Activated B cell treated with CpG ODN at 0.5 μM for 24 hours (primary cell): ENCODE measurements at regions of chr6 and their contacts with region 1.

Region 1: GRCh38 chr6:28104392-28105244 is 19.8 kb upstream of the ZSCAN16 start:
- DNase-seq: peak; percentile 80
- ATAC-seq: peak; percentile 98
- H3K4me3 Mint-ChIP-seq: peak overlapping the region; percentile 94
- H3K27ac Mint-ChIP-seq: peak overlapping the region; percentile 95
- H3K4me1 Mint-ChIP-seq: peaks cover 10% of the 10 kb centered on the region
- H3K27me3 Mint-ChIP-seq: peaks cover 6% of the 10 kb centered on the region
- CTCF ChIP-seq: no peak

Region 2: DNA sequence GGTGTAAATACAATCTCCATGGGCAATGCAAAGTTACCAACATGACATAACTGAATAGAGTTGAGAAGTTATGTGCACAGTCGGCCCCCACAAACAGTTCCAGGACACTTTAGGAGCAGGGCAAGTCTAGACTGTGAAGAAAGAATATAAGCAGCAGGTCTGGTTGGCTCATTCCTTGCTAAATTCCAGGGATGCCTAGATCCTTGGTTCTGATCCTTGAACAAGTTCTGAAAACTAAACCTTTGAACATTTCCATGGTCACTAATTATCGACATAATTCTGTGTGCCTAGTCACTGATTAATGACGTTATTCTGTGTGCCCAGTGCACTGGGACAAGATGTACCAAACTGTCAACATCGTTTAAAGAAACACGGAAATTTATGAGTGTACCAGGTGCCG is 643.9 kb before region 1 on chr6:
- CTCF ChIA-PET with region 1: no interaction called
- POLR2A ChIA-PET with region 1: no interaction called
- intact Hi-C with region 1: no loop called
- DNase-seq: no peak
- ATAC-seq: no peak
- H3K4me3 Mint-ChIP-seq: no peak overlapping the region
- H3K27ac Mint-ChIP-seq: no peak overlapping the region
- H3K4me1 Mint-ChIP-seq: no peaks in the 10 kb centered on the region
- H3K27me3 Mint-ChIP-seq: no peaks in the 10 kb centered on the region
- CTCF ChIP-seq: no peak

Region 3: DNA sequence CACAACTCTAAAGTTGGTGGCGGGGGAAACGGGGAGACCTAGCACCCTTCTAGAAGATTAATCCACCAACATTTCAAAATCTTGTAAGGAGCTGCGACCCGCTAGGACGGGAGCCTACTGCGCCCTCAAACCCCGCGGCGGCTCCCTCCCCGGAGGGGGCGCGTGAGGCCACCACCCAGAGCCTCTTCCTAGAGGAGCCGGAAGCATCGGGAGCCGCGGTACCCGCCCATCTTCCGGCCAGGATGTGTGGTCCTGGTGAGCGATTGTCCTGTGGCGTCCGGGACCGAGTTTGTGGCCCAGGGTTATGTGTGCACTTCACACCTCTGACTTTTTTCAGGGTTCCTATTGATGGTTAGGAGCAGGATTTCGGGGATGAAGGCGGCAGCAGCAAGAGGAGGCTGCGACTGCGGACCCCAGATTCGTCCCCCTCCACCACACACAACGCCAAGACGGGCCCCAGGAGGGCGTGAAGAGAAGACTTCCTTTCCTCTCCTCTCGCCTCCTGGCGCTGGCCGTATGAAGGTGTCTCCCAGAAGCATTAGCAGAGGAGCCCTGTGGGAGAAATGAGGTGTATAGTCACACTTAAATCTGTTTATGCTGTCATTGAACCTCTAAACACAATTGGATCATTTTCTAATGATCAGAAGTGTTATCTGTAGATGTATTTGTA is 13.6 kb before region 1 on chr6:
- CTCF ChIA-PET with region 1: no interaction called
- POLR2A ChIA-PET with region 1: interaction called, 12 read pairs
- intact Hi-C with region 1: no loop called
- DNase-seq: no peak
- ATAC-seq: no peak
- H3K4me3 Mint-ChIP-seq: peak overlapping the region; percentile 33
- H3K27ac Mint-ChIP-seq: no peak overlapping the region
- H3K4me1 Mint-ChIP-seq: peaks cover 3% of the 10 kb centered on the region
- H3K27me3 Mint-ChIP-seq: no peaks in the 10 kb centered on the region
- CTCF ChIP-seq: no peak

Region 4: GRCh38 chr6:28124102-28124970 is 19.7 kb after region 1 on chr6 and contains the start of gene ZSCAN16:
- CTCF ChIA-PET with region 1: interaction called, 4 read pairs
- POLR2A ChIA-PET with region 1: interaction called, 14 read pairs
- intact Hi-C with region 1: loop called (anchors 1 kb)
- DNase-seq: peak; percentile 72
- ATAC-seq: peak; percentile 96
- H3K4me3 Mint-ChIP-seq: peak within 1 kb of the TSS; percentile 97
- H3K27ac Mint-ChIP-seq: peak within 1 kb of the TSS; percentile 95
- H3K4me1 Mint-ChIP-seq: peaks cover 27% of the 10 kb centered on the region
- H3K27me3 Mint-ChIP-seq: no peaks in the 10 kb centered on the region
- CTCF ChIP-seq: no peak
- total RNA-seq, gene ZSCAN16: 10.6 and 12.6 TPM in 2 replicates